Activated CD4-positive, alpha-beta T cell treated with anti-CD3 and anti-CD28 coated beads, Interleukin-2, amount 10 ng/mL, durations not matched to agents 24 days and 14 days (primary cell): ENCODE measurements at regions of chr17 and their contacts with region 1.

Region 1: GRCh38 chr17:67475236-67475937 is 98.3 kb downstream of the PITPNC1 start:
- DNase-seq: peak; percentile 95
- H3K4me3 Mint-ChIP-seq: peak overlapping the region; percentile 69
- H3K27ac Mint-ChIP-seq: peak overlapping the region; percentile 87
- H3K4me1 Mint-ChIP-seq: peaks cover 58% of the 10 kb centered on the region
- H3K27me3 Mint-ChIP-seq: no peaks in the 10 kb centered on the region

Region 2: GRCh38 chr17:67121316-67121887 is 354.0 kb before region 1 on chr17:
- intact Hi-C with region 1: no loop called
- DNase-seq: no peak
- H3K4me3 Mint-ChIP-seq: no peak overlapping the region
- H3K27ac Mint-ChIP-seq: no peak overlapping the region
- H3K4me1 Mint-ChIP-seq: peaks cover 2% of the 10 kb centered on the region
- H3K27me3 Mint-ChIP-seq: no peaks in the 10 kb centered on the region

Region 3: GRCh38 chr17:67376737-67377487 is 98.5 kb before region 1 on chr17 and contains the start of gene PITPNC1:
- intact Hi-C with region 1: loop called (anchors 1 kb)
- DNase-seq: peak; percentile 96
- H3K4me3 Mint-ChIP-seq: peak within 1 kb of the TSS; percentile 92
- H3K27ac Mint-ChIP-seq: peak within 1 kb of the TSS; percentile 93
- H3K4me1 Mint-ChIP-seq: peaks cover 27% of the 10 kb centered on the region
- H3K27me3 Mint-ChIP-seq: no peaks in the 10 kb centered on the region
- total RNA-seq, gene PITPNC1: 18.7 and 22.3 TPM in 2 replicates

Region 4: DNA sequence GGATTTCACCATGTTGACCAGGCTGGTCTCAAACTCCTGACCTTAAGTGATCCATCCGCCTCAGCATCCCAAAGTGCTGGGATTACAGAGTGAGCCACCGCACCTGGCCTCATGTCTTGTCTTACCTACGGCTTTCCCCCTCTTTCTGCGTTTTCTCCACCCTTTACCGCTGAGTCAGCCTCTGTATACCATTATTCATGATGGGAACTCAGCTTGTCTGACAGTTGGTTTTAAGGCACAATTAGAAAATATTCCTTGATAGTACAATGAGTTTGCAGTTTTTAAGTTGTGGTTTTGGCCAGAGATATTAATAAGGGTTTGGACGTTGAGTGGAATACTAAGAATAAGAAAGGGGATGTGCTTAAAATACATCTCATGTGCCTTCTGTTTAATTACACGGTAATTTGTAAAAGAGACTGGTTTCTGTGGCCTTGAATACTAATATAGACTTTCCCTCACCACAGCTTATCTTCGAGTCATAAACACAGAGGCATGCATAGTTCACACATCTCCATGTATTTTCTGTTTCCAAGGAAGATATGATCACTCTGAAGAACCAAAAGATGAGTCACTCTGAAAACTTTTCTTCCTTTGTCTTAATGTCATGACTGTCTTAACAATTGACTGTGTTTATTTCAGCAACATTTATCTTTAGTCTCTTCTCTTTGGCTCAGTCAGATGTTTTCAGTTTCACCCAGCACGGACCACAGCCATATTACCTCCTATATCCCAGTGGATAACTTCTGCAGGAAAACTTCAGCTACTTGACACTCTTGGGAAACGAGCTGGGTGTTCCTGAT is 43.9 kb before region 1 on chr17:
- intact Hi-C with region 1: loop called (anchors 1 kb)
- DNase-seq: peak; percentile 66
- H3K4me3 Mint-ChIP-seq: peak overlapping the region; percentile 74
- H3K27ac Mint-ChIP-seq: peak overlapping the region; percentile 93
- H3K4me1 Mint-ChIP-seq: peaks cover 55% of the 10 kb centered on the region
- H3K27me3 Mint-ChIP-seq: no peaks in the 10 kb centered on the region

Region 5: GRCh38 chr17:67452681-67453554 is 22.5 kb before region 1 on chr17:
- intact Hi-C with region 1: loop called (anchors 1 kb)
- DNase-seq: peak; percentile 83
- H3K4me3 Mint-ChIP-seq: peak overlapping the region; percentile 76
- H3K27ac Mint-ChIP-seq: peak overlapping the region; percentile 97
- H3K4me1 Mint-ChIP-seq: peaks cover 60% of the 10 kb centered on the region
- H3K27me3 Mint-ChIP-seq: no peaks in the 10 kb centered on the region

Region 6: DNA sequence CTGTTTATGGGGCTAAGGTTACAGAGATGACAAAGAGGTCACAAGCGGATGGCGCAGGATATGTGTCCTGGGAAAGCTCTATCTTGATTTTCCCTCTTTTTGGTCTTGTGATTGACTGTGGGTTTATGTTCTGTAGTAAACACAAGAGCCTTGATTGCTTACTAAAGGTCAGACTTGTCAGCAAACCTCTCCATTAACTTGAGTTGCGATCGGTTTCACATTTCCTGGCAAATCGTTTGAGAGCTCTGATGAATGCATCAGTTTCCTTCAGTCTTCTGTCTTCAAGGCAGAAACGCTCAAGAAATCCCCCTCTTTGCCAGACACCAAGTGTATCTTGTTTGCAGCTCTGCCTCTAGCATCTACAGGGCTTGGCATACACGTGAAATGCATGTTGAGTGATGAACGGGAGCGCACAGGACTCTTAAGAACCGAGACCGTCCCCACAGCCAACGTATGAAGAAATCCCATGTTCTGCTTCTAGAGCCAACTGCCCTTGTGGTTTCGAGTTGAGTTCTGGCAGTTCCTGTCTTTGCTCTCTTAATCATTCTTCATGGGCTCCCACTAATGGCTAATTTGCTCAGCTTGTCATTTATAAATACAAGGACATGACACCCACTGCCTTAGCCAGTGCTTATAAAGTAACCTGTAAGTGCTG is 45.0 kb after region 1 on chr17:
- intact Hi-C with region 1: no loop called
- DNase-seq: no peak
- H3K4me3 Mint-ChIP-seq: peak overlapping the region; percentile 13
- H3K27ac Mint-ChIP-seq: no peak overlapping the region
- H3K4me1 Mint-ChIP-seq: peaks cover 20% of the 10 kb centered on the region
- H3K27me3 Mint-ChIP-seq: no peaks in the 10 kb centered on the region

Region 7: GRCh38 chr17:67602956-67603355 is 127.6 kb after region 1 on chr17:
- intact Hi-C with region 1: loop called (anchors 1 kb)
- DNase-seq: peak; percentile 86
- H3K4me3 Mint-ChIP-seq: no peak overlapping the region
- H3K27ac Mint-ChIP-seq: no peak overlapping the region
- H3K4me1 Mint-ChIP-seq: peaks cover 6% of the 10 kb centered on the region
- H3K27me3 Mint-ChIP-seq: no peaks in the 10 kb centered on the region